ENCODE measurements at regions of chr22 and their contacts with region 1.

Region 1: GRCh38 chr22:36123673-36124630 is 36.6 kb downstream of the APOL3 start:
- DNase-seq: peak; percentile 93 to 97 (median 96)
- H3K4me3 ChIP-seq: peak overlapping the region; percentile 22 to 74 (median 46)
- H3K27ac ChIP-seq: no peak overlapping the region
- H3K4me1 ChIP-seq: peaks cover 0 to 6% (median 4%) of the 10 kb centered on the region in 4 experiments
- H3K27me3 ChIP-seq: no peaks in the 10 kb centered on the region

Region 2: GRCh38 chr22:35930933-35931332 is 193.0 kb before region 1 on chr22:
- CTCF ChIA-PET with region 1: interaction called, 25 read pairs
- POLR2A ChIA-PET with region 1: no interaction called
- DNase-seq: peak; percentile 67 to 76 (median 74)
- H3K4me3 ChIP-seq: no peak overlapping the region
- H3K27ac ChIP-seq: no peak overlapping the region
- H3K4me1 ChIP-seq: no peaks in the 10 kb centered on the region
- H3K27me3 ChIP-seq: no peaks in the 10 kb centered on the region